ENCODE measurements at regions of chr9 and their contacts with region 1.

Region 1: DNA sequence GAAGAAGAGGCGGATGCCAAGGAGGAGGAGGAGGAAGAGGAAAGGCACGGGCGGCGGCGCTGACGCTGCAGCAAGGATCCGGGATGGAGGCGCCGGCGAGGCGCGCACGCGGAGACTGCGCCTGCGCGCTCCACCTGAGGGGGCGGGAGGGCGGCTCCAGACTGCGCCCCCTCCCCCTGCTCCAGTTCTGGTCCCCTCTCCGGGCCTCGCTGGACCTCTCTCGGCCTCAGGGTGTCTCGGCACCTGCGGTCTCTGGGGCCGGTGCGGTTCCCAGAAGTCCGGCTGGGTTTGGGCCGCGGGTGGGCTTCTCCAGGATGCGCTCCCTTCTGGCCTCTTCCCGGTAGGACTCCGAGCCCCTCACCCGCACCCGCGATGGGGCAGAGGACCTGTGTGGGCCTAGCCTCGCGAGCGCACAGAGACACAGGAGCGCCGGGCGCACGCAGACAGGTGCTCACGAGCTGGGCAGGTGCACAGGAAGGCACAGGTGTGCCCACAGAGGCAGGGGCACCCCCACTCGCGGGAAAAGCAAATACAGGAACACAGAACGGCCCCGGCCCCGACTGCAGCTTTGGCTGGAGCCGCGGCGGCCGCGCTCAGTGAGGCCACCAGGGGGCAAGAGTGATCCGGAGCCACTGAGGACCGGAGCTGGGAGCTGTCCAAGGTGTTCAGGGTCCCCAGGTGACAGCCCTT is at the start of gene NPDC1:
- DNase-seq: peak; percentile 67 to 90 (median 75)
- ATAC-seq: peak; percentile 87
- H3K4me3 ChIP-seq: peak within 1 kb of the TSS; percentile 55
- H3K4me3 Mint-ChIP-seq: peak within 1 kb of the TSS; percentile 51
- H3K27ac ChIP-seq: no peak within 1 kb of the TSS
- H3K27ac Mint-ChIP-seq: no peak within 1 kb of the TSS
- H3K4me1 ChIP-seq: peaks cover 44% of the 10 kb centered on the region
- H3K4me1 Mint-ChIP-seq: no peaks in the 10 kb centered on the region
- H3K27me3 ChIP-seq: peaks cover 68 to 69% of the 10 kb centered on the region in 2 experiments
- H3K27me3 Mint-ChIP-seq: peaks cover 44% of the 10 kb centered on the region
- CTCF ChIP-seq: peak; percentile 77
- total RNA-seq, gene NPDC1: 15.3 to 16.0 TPM

Region 2: GRCh38 chr9:136875159-136875559 is 171.1 kb before region 1 on chr9:
- CTCF ChIA-PET with region 1: no interaction called
- POLR2A ChIA-PET with region 1: no interaction called
- intact Hi-C with region 1: no loop called
- DNase-seq: no peak
- ATAC-seq: no peak
- H3K4me3 ChIP-seq: no peak overlapping the region
- H3K4me3 Mint-ChIP-seq: no peak overlapping the region
- H3K27ac ChIP-seq: no peak overlapping the region
- H3K27ac Mint-ChIP-seq: no peak overlapping the region
- H3K4me1 ChIP-seq: no peaks in the 10 kb centered on the region
- H3K4me1 Mint-ChIP-seq: no peaks in the 10 kb centered on the region
- H3K27me3 ChIP-seq: no peaks in the 10 kb centered on the region
- H3K27me3 Mint-ChIP-seq: no peaks in the 10 kb centered on the region
- CTCF ChIP-seq: no peak

Region 3: DNA sequence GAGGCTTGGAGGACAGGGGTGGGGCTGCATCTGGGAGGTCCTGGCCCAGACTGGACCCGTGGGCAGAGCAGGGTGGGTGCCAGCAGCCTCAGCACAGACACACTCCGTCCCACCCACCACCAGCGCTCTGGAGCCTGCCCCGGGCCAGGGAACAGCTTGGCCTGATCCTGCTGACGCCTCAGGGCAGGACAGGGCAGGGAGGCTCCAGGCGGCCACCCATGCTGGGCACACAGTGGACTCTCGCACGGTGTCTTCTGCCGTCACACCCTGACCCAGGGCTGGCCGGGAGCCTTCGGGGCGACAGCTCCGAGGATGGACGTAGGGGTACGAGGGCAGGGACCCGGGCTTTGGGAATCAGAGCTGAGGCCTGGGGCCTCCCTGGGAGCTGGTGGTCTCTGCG is 77.1 kb before region 1 on chr9:
- CTCF ChIA-PET with region 1: no interaction called
- POLR2A ChIA-PET with region 1: no interaction called
- intact Hi-C with region 1: no loop called
- DNase-seq: no peak
- ATAC-seq: no peak
- H3K4me3 ChIP-seq: no peak overlapping the region
- H3K4me3 Mint-ChIP-seq: no peak overlapping the region
- H3K27ac ChIP-seq: no peak overlapping the region
- H3K27ac Mint-ChIP-seq: no peak overlapping the region
- H3K4me1 ChIP-seq: peaks cover 42% of the 10 kb centered on the region
- H3K4me1 Mint-ChIP-seq: peaks cover 15% of the 10 kb centered on the region
- H3K27me3 ChIP-seq: no peaks in the 10 kb centered on the region
- H3K27me3 Mint-ChIP-seq: no peaks in the 10 kb centered on the region
- CTCF ChIP-seq: no peak

Region 4: DNA sequence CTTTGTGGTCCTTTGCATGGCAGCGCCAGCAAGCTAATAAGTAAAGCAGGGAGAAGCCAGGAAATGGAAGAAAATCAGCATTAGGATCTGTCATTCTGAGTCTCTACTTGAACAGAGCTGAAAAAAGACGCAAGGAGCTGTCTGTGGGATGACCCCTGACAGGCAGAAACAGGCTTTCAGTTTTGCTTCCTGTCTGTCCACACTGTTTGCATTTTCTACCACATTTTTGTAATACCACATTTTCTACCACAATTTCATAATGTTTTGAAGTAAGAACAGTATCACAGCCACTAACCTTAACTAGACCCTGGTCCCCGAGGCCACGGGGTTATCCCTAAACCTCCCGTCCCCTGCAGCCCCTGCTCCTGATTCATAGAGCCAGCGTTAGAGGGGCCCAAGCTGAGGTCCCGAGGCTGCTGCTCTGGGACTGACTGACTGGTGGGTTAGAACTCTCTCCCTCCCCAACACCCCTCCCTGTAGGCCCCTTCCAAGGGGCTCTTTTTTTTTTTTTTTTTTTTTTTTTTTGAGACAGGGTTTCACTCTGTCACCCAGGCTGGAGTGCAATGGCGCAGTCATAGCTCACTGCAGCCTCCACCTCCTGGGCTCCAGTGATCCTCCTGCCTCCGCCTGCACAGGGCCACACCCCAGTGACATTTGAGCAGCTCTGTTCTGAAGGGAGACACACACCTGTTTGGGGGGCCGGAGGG is 45.9 kb before region 1 on chr9:
- CTCF ChIA-PET with region 1: no interaction called
- POLR2A ChIA-PET with region 1: no interaction called
- intact Hi-C with region 1: no loop called
- DNase-seq: peak in 3 of 14 experiments; percentile 56 to 70 (median 58)
- ATAC-seq: peak; percentile 31
- H3K4me3 ChIP-seq: no peak overlapping the region
- H3K4me3 Mint-ChIP-seq: peak overlapping the region; percentile 30
- H3K27ac ChIP-seq: no peak overlapping the region
- H3K27ac Mint-ChIP-seq: peak overlapping the region; percentile 53
- H3K4me1 ChIP-seq: peaks cover 57% of the 10 kb centered on the region
- H3K4me1 Mint-ChIP-seq: peaks cover 28% of the 10 kb centered on the region
- H3K27me3 ChIP-seq: peaks cover 0 to 4% of the 10 kb centered on the region in 2 experiments
- H3K27me3 Mint-ChIP-seq: peaks cover 10% of the 10 kb centered on the region
- CTCF ChIP-seq: no peak

Region 5: DNA sequence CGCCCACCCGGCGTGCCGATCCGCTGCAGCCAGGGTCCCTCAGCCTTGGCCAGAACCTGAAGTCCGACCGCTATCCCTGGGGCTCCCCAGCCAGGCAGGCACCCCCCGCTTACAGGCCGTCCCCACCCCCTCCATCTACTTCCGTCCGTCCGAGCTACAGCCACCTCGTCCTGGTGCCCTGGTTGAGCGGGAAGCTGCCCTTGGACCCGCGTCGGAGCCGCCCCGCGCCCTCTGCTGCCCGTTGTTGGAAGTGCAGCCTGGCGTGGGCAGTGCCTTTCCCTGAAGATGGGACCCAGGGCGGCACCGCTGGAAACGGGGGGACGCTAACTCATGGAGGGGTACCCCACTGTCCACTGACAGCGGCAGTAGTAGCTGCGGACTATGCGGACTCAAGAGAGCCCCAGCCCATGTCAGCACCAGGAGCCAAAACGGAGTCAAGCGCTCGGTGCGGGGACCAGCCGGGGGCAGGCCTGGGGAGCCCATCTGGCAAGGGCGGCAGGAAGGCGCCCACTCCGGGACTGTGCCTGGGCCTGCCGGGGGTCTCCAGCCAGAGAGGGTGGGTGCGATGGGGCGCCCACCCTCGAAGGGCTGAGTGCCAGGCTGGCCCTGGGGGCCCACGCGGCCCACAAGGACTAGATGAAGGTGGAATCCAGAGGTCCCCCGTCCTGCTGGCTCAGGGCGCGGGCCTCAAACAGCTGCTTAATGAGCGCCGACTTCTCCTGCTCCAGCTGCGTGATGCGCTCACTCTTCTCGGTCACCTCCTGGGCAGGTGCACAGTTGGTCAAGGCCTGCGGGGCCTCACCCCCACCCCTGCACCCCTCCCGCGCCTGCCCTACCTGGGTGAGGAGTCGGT is 18.0 kb after region 1 on chr9:
- CTCF ChIA-PET with region 1: interaction called, 38 read pairs
- POLR2A ChIA-PET with region 1: interaction called, 5 read pairs
- intact Hi-C with region 1: loop called in 1 of 2 experiments (anchors 1 kb)
- DNase-seq: peak; percentile 34 to 80 (median 53)
- ATAC-seq: no peak
- H3K4me3 ChIP-seq: no peak overlapping the region
- H3K4me3 Mint-ChIP-seq: no peak overlapping the region
- H3K27ac ChIP-seq: no peak overlapping the region
- H3K27ac Mint-ChIP-seq: no peak overlapping the region
- H3K4me1 ChIP-seq: peaks cover 20% of the 10 kb centered on the region
- H3K4me1 Mint-ChIP-seq: peaks cover 6% of the 10 kb centered on the region
- H3K27me3 ChIP-seq: peaks cover 0 to 3% of the 10 kb centered on the region in 2 experiments
- H3K27me3 Mint-ChIP-seq: peaks cover 4% of the 10 kb centered on the region
- CTCF ChIP-seq: peak; percentile 84

Region 6: GRCh38 chr9:137070201-137070905 is 24.1 kb after region 1 on chr9 and contains the start of gene SAPCD2:
- CTCF ChIA-PET with region 1: interaction called, 38 read pairs
- POLR2A ChIA-PET with region 1: interaction called, 5 read pairs
- intact Hi-C with region 1: no loop called
- DNase-seq: peak; percentile 68 to 94 (median 78)
- ATAC-seq: peak; percentile 88
- H3K4me3 ChIP-seq: peak within 1 kb of the TSS; percentile 45
- H3K4me3 Mint-ChIP-seq: peak within 1 kb of the TSS; percentile 82
- H3K27ac ChIP-seq: no peak within 1 kb of the TSS
- H3K27ac Mint-ChIP-seq: peak within 1 kb of the TSS; percentile 24
- H3K4me1 ChIP-seq: peaks cover 28% of the 10 kb centered on the region
- H3K4me1 Mint-ChIP-seq: peaks cover 16% of the 10 kb centered on the region
- H3K27me3 ChIP-seq: peaks cover 0 to 8% of the 10 kb centered on the region in 2 experiments
- H3K27me3 Mint-ChIP-seq: peaks cover 4% of the 10 kb centered on the region
- CTCF ChIP-seq: no peak
- total RNA-seq, gene SAPCD2: 0.17 to 0.19 TPM

Region 7: GRCh38 chr9:137423004-137423874 is 377.0 kb after region 1 on chr9 and contains the starts of genes EXD3 and NOXA1:
- CTCF ChIA-PET with region 1: no interaction called
- POLR2A ChIA-PET with region 1: no interaction called
- intact Hi-C with region 1: no loop called
- DNase-seq: peak; percentile 91 to 97 (median 94)
- ATAC-seq: peak; percentile 89
- H3K4me3 ChIP-seq: peak within 1 kb of the TSS; percentile 65
- H3K4me3 Mint-ChIP-seq: peak within 1 kb of the TSS; percentile 91
- H3K27ac ChIP-seq: no peak within 1 kb of the TSS
- H3K27ac Mint-ChIP-seq: peak within 1 kb of the TSS; percentile 69
- H3K4me1 ChIP-seq: peaks cover 19% of the 10 kb centered on the region
- H3K4me1 Mint-ChIP-seq: peaks cover 18% of the 10 kb centered on the region
- H3K27me3 ChIP-seq: no peaks in the 10 kb centered on the region
- H3K27me3 Mint-ChIP-seq: no peaks in the 10 kb centered on the region
- CTCF ChIP-seq: no peak
- total RNA-seq, gene EXD3: 14.9 to 16.9 TPM
- total RNA-seq, gene NOXA1: 6.7 to 7.7 TPM